PC-3 (cell line): ENCODE measurements at regions of chr4 and their contacts with region 1.

Region 1: GRCh38 chr4:111923786-111924185 is 221.5 kb upstream of the FAM241A start:
- DNase-seq: no peak
- ATAC-seq: no peak
- H3K4me3 ChIP-seq: no peak overlapping the region
- H3K27ac ChIP-seq: no peak overlapping the region
- H3K4me1 ChIP-seq: no peaks in the 10 kb centered on the region
- H3K27me3 ChIP-seq: peaks cover 24% of the 10 kb centered on the region; the same call in 1 of the 2 replicates
- CTCF ChIP-seq: no peak

Region 2: GRCh38 chr4:110231869-110232268 is 1691.9 kb before region 1 on chr4:
- CTCF ChIA-PET with region 1: no interaction called
- POLR2A ChIA-PET with region 1: interaction called, 11 read pairs
- intact Hi-C with region 1: no loop called
- DNase-seq: peak; percentile 81
- ATAC-seq: peak; percentile 97
- H3K4me3 ChIP-seq: no peak overlapping the region
- H3K27ac ChIP-seq: peak overlapping the region; percentile 41
- H3K4me1 ChIP-seq: peaks cover 20% of the 10 kb centered on the region
- H3K27me3 ChIP-seq: no peaks in the 10 kb centered on the region
- CTCF ChIP-seq: no peak

Region 3: DNA sequence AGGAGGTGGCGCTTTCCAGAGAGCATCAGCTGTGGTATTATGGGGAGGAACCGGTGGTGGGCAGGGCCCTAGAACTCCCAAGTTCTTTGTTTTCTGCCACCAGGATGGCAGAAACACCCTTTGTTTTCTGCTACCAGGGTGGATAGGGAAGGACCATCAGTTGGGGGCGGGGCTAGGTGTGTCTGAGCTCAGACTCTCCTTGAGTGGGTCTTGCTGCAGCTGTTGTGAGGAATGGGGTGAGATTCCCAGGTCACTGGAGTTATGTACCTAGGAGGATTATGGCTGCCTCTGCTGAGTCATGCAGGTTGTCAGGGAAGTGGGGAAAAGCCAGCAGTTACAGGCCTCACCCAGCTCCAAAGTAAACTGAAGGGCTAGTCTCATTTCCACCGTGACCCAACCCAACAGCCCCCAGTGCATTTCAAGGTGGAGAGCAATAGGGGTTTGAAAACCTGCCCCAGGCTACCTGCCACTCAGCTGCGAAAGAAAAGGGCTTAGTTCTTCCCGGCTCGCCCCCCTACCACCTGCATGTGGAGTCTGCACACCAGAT is 53.7 kb after region 1 on chr4:
- CTCF ChIA-PET with region 1: no interaction called
- POLR2A ChIA-PET with region 1: no interaction called
- intact Hi-C with region 1: no loop called
- DNase-seq: no peak
- ATAC-seq: no peak
- H3K4me3 ChIP-seq: no peak overlapping the region
- H3K27ac ChIP-seq: no peak overlapping the region
- H3K4me1 ChIP-seq: no peaks in the 10 kb centered on the region
- H3K27me3 ChIP-seq: peaks cover 4% of the 10 kb centered on the region; the same call in 1 of the 2 replicates
- CTCF ChIP-seq: no peak